B cell (primary cell): ENCODE measurements at regions of chr11 and their contacts with region 1.

Region 1: DNA sequence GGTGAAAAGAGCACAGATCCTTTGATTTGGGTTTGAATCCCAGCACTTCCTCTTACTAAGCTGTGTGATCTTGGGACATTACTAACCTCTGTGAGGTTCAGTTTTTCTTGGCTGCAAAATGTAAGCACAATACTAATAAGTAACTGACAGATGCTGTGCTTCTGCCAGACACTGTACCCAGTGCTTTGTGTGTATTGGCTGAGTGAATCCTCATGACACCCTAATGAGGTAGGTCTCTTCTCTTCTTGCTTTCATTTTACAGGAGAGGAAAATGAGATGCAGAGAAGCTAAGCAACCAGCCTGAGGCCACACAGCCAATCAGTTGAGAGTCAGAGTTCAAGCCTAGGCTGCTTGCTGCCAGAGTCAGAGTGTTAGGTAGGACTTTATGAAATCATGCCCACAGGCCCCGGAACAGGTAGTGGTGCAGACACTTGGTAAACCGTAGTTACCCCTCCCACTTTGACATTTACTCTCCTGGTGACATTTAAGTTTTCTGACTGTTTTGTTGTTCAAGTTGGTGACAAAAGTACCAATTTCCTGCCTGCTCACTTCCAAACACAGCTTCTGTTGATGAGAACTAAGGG is 21.2 kb downstream of the PTPRJ start:
- DNase-seq: peak; percentile 55
- ATAC-seq: peak; percentile 84
- H3K4me3 ChIP-seq: peak overlapping the region in 1 of 5 experiments; percentile 19
- H3K4me3 Mint-ChIP-seq: peak overlapping the region; percentile 48
- H3K27ac ChIP-seq: peak overlapping the region; percentile 19 to 60
- H3K27ac Mint-ChIP-seq: peak overlapping the region; percentile 89
- H3K4me1 ChIP-seq: peaks cover 63 to 90% of the 10 kb centered on the region in 2 donors
- H3K4me1 Mint-ChIP-seq: peaks cover 75% of the 10 kb centered on the region
- H3K27me3 ChIP-seq: no peaks in the 10 kb centered on the region
- H3K27me3 Mint-ChIP-seq: no peaks in the 10 kb centered on the region
- CTCF ChIP-seq: no peak

Region 2: DNA sequence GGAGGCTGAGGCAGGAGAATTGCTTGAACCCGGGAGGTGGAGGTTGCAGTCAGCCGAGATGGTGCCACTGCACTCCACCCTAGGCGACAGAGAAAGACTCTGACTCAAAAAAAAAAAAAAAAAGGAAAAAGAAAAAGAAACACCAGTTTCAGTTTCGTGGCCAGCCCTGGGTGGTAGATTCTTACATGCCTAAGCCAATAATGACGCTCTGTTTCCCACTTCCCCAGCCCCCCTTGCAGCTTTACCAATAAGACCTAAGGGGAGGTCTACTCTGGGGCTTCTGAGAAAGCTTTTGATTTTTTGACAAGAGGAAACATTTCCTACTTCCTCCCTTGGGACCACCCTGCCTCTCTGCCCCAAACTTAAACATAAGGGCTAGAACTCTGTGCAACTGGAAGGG is 51.1 kb before region 1 on chr11:
- CTCF ChIA-PET with region 1: no interaction called
- POLR2A ChIA-PET with region 1: interaction called, 4 read pairs
- intact Hi-C with region 1: loop called (anchors 5 kb)
- DNase-seq: peak; percentile 91
- ATAC-seq: peak; percentile 98
- H3K4me3 ChIP-seq: peak overlapping the region in 2 of 5 experiments; percentile 19 to 49
- H3K4me3 Mint-ChIP-seq: peak overlapping the region; percentile 48
- H3K27ac ChIP-seq: peak overlapping the region; percentile 58 to 66
- H3K27ac Mint-ChIP-seq: peak overlapping the region; percentile 86
- H3K4me1 ChIP-seq: peaks cover 34 to 42% of the 10 kb centered on the region in 2 donors
- H3K4me1 Mint-ChIP-seq: peaks cover 48% of the 10 kb centered on the region
- H3K27me3 ChIP-seq: no peaks in the 10 kb centered on the region
- H3K27me3 Mint-ChIP-seq: no peaks in the 10 kb centered on the region
- CTCF ChIP-seq: no peak

Region 3: GRCh38 chr11:47991266-47991830 is 10.2 kb before region 1 on chr11:
- CTCF ChIA-PET with region 1: interaction called, 3 read pairs
- POLR2A ChIA-PET with region 1: no interaction called
- intact Hi-C with region 1: loop called (anchors 2 kb)
- DNase-seq: no peak
- ATAC-seq: peak; percentile 11
- H3K4me3 ChIP-seq: peak overlapping the region in 1 of 5 experiments; percentile 8
- H3K4me3 Mint-ChIP-seq: peak overlapping the region; percentile 65
- H3K27ac ChIP-seq: peak overlapping the region; percentile 5 to 21
- H3K27ac Mint-ChIP-seq: peak overlapping the region; percentile 69
- H3K4me1 ChIP-seq: peaks cover 36 to 54% of the 10 kb centered on the region in 2 donors
- H3K4me1 Mint-ChIP-seq: peaks cover 58% of the 10 kb centered on the region
- H3K27me3 ChIP-seq: no peaks in the 10 kb centered on the region
- H3K27me3 Mint-ChIP-seq: no peaks in the 10 kb centered on the region
- CTCF ChIP-seq: no peak

Region 4: GRCh38 chr11:48013269-48013901 is 11.9 kb after region 1 on chr11:
- CTCF ChIA-PET with region 1: interaction called, 7 read pairs
- POLR2A ChIA-PET with region 1: interaction called, 6 read pairs
- intact Hi-C with region 1: loop called (anchors 1 kb)
- DNase-seq: peak; percentile 72
- ATAC-seq: peak; percentile 90
- H3K4me3 ChIP-seq: peak overlapping the region in 1 of 5 experiments; percentile 28
- H3K4me3 Mint-ChIP-seq: peak overlapping the region; percentile 80
- H3K27ac ChIP-seq: peak overlapping the region; percentile 66 to 76
- H3K27ac Mint-ChIP-seq: peak overlapping the region; percentile 94
- H3K4me1 ChIP-seq: peaks cover 59 to 75% of the 10 kb centered on the region in 2 donors
- H3K4me1 Mint-ChIP-seq: peaks cover 69% of the 10 kb centered on the region
- H3K27me3 ChIP-seq: no peaks in the 10 kb centered on the region
- H3K27me3 Mint-ChIP-seq: no peaks in the 10 kb centered on the region
- CTCF ChIP-seq: no peak

Region 5: DNA sequence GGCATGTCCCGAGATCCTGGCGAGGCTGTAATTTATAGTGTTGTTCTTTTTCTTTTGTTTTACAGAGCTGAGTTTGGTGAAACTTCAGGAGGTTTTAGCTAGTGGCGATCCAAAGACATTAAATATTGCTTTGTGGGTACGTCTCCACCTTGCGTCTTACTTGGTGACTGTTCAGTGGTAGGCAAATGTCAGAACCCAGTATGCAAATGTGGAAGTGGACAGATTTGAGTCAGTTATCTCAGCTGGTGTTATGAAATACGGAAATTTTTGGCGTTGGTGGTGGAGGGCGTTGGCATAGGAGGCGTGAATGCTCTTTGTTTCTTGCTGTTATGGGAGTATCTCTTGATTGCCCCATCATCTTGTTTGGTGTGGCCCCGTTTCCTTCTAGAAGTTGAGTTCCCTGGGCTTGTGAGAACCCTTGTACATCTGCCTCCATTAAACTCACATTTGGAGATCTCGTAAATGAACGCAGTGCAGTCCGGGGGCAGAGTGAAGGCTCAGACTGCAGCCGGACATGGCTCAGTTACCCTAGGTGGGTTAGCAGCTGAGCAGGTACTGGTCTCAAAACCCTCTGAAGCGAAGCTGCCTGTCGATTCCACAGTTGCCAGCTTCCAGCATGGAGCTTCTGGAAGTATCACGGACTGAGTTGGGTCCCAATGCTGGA is 18.7 kb after region 1 on chr11:
- CTCF ChIA-PET with region 1: interaction called, 7 read pairs
- POLR2A ChIA-PET with region 1: no interaction called
- intact Hi-C with region 1: loop called (anchors 2 kb)
- DNase-seq: peak; percentile 75
- ATAC-seq: peak; percentile 79
- H3K4me3 ChIP-seq: peak overlapping the region in 2 of 5 experiments; percentile 32 to 55
- H3K4me3 Mint-ChIP-seq: peak overlapping the region; percentile 54
- H3K27ac ChIP-seq: peak overlapping the region; percentile 53 to 55
- H3K27ac Mint-ChIP-seq: peak overlapping the region; percentile 32
- H3K4me1 ChIP-seq: peaks cover 62 to 87% of the 10 kb centered on the region in 2 donors
- H3K4me1 Mint-ChIP-seq: peaks cover 79% of the 10 kb centered on the region
- H3K27me3 ChIP-seq: no peaks in the 10 kb centered on the region
- H3K27me3 Mint-ChIP-seq: no peaks in the 10 kb centered on the region
- CTCF ChIP-seq: peak; percentile 26

Region 6: DNA sequence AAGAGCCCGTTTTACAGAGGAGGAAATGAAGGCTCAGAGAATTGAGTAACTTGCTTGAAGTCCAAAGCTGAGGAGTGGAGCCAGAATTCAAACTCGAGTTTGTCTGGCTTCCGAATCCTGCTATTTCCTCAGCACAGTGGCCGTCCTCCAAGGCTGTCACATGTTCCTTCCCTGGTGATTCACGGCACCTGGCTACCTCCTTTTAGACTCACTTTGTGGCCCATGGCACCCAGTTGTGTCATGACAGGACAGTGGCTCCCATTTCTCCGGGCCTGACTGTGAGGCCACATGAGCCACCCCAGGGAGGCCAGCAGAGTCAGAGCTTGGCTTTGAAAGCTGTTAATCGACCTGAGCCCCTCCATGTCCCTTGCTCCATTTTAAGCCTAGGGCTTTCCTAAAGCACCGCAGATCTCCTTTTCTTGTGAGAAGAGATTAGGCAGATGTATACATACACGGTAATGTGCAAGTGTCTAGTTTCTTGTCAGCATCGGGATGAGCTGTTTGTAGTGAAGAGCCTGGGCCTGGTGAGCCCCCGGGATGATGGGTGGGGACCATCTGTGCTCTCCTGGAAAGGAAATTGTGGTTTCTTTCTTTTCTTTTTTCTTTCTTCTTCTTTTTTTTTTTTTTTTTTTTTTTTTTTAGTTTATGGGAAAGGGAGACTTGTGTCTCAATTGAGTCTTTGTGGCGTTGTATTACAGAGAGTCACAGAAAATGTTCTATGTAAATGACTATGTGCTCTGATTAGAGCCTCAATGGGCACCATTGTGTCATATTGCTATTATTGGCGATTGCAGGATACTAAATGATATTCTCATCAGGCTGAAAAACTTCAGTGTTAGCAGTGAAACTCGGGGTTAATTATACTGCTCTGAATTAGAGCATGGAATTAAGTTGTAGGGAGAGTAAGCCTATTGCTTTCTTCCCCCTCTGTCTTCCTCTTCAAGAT is 33.7 kb after region 1 on chr11:
- CTCF ChIA-PET with region 1: no interaction called
- POLR2A ChIA-PET with region 1: interaction called, 5 read pairs
- intact Hi-C with region 1: loop called (anchors 5 kb)
- DNase-seq: no peak
- ATAC-seq: no peak
- H3K4me3 ChIP-seq: no peak overlapping the region
- H3K4me3 Mint-ChIP-seq: no peak overlapping the region
- H3K27ac ChIP-seq: no peak overlapping the region
- H3K27ac Mint-ChIP-seq: no peak overlapping the region
- H3K4me1 ChIP-seq: peaks cover 66 to 77% of the 10 kb centered on the region in 2 donors
- H3K4me1 Mint-ChIP-seq: peaks cover 65% of the 10 kb centered on the region
- H3K27me3 ChIP-seq: no peaks in the 10 kb centered on the region
- H3K27me3 Mint-ChIP-seq: no peaks in the 10 kb centered on the region
- CTCF ChIP-seq: no peak

Region 7: DNA sequence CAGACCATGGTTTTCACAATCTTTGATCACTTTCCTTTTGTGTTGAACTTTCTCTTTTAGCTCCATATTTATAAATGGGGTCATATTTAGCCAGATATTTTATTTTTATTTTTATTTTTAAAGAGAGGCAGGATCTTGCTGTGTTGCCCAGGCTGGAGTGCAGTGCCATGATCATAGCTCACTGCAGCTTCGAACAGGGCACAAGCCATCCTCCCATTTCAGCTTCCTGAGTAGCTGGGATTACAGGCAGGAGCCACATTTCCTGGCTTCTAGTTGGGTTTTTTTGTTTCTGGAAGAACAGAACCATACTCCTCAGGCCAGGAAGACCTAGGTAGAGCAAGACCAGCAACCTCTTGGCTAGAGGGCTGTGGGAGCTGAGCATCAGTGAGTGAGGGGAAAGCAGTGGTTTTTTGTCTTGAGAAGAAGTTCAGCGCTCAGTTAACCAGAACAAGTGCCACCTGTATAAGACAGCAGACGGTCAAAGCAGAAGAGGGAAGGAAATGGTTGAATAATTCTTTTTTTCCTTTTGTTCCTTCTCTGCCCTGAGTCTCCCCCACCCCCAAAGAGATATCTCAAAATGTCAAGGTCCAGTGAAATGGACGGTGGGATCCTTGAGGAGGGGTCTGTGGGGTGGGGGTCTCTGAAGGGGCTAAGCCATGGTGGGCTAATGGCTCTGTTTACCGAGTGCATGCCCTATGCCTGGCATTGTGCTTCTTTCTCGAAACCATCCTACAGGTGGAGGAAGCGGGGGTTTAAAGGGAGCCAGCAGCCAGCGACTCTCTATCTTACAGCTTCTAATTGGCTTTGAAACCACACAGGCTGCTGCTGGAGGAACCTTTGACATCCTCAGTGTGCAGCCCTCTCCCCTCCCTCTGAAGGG is 41.8 kb after region 1 on chr11:
- CTCF ChIA-PET with region 1: no interaction called
- POLR2A ChIA-PET with region 1: no interaction called
- intact Hi-C with region 1: loop called (anchors 5 kb)
- DNase-seq: peak; percentile 67
- ATAC-seq: peak; percentile 76
- H3K4me3 ChIP-seq: peak overlapping the region in 4 of 5 experiments; percentile 12 to 44 (median 16)
- H3K4me3 Mint-ChIP-seq: peak overlapping the region; percentile 64
- H3K27ac ChIP-seq: peak overlapping the region; percentile 57 to 71
- H3K27ac Mint-ChIP-seq: peak overlapping the region; percentile 72
- H3K4me1 ChIP-seq: peaks cover 43 to 65% of the 10 kb centered on the region in 2 donors
- H3K4me1 Mint-ChIP-seq: peaks cover 64% of the 10 kb centered on the region
- H3K27me3 ChIP-seq: no peaks in the 10 kb centered on the region
- H3K27me3 Mint-ChIP-seq: no peaks in the 10 kb centered on the region
- CTCF ChIP-seq: no peak